Ascending aorta (tissue), 2 donors: ENCODE measurements at regions of chr19 and their contacts with region 1.

Region 1: GRCh38 chr19:58558623-58559274 is 338 bp upstream of the UBE2M start:
- DNase-seq: peak; percentile 92 to 99
- H3K4me3 ChIP-seq: peak overlapping the region; percentile 67 to 75
- H3K27ac ChIP-seq: peak overlapping the region; percentile 98 to 99
- H3K4me1 ChIP-seq: peaks cover 28 to 54% of the 10 kb centered on the region in 2 donors
- H3K27me3 ChIP-seq: no peaks in the 10 kb centered on the region
- CTCF ChIP-seq: no peak

Region 2: DNA sequence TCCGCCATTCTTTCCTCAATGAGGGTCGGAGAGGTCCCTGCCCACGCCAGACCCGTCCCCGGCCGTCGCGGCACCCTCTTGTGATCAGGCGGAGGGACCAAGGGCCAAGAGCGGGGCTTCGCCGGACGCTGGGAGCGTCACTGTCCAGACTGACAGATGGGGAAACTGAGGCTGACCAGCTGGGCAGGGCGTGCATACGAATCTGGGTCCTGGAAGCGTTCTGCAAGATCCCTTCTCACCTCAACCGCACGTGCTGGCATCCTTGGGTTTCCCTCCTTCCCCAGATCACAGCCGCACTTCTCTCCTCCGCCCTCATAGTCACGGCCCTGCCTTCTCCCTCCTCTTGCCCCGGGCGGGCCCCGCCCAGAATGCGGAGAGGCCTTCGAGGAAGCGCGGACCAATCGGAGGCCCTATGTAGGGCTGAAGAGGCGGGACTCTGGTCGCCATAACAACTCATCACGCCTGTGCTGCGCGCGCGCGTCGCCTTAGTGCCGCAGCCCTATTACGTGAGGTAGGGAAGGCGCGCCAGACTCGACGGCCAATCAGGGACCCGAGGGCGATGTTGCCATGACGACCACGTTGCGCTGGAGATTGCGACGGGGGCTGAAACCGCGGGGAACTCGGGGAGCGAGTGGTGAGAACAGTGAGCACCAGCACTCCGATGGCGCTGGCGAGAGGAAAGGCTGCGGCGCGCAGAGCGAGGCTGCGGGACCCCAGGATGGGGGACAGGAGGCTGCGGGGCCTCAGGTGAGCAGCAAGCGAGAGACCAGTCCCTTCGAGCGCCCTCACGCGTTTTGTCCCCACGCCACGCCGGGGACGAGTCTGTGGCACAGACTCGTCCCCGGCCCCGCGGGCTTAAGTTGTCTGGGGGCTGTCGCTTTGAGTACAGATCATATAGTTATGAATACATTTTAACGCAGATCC is 157.6 kb before region 1 on chr19:
- intact Hi-C with region 1: loop called (anchors 1 kb)
- DNase-seq: peak; percentile 99
- H3K4me3 ChIP-seq: peak overlapping the region; percentile 66 to 67
- H3K27ac ChIP-seq: no peak overlapping the region
- H3K4me1 ChIP-seq: peaks cover 7 to 10% of the 10 kb centered on the region in 2 donors
- H3K27me3 ChIP-seq: no peaks in the 10 kb centered on the region
- CTCF ChIP-seq: peak in 1 of 3 experiments; percentile 30

Region 3: DNA sequence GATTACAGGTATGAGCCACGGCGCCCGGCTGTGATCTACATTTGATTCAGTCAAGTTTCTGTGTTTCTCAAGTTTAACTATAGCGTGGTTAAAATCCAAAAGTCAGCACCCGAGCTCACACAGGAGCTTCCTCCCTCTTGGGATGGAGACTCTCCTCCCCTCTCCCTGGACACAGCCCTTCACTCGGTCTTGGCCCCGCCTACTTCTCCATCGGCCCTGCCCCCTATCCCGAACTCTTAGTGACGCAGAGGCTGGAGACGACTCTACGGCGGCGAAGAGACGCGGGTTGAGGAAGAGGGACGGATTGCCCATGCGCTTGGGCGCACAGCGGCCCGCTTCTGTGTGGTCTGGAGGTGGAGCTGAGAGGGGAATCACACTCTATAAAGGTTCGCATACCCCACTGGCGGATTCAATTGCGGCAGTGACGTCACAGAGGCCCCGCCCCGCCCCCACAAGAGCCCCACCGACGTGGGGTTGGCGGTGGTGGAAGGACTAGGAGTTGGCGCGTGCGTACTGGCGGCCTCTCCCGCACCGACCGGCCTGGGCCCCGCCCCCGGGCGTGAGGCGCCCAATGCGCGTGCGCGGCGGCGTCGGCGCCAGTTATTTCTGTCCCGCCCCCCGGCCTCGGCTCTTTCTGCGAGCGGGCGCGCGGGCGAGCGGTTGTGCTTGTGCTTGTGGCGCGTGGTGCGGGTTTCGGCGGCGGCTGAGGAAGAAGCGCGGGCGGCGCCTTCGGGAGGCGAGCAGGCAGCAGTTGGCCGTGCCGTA is 14.7 kb before region 1 on chr19 and contains the start of gene TRIM28:
- intact Hi-C with region 1: loop called (anchors 1 kb)
- DNase-seq: peak; percentile 95 to 99
- H3K4me3 ChIP-seq: peak within 1 kb of the TSS; percentile 75 to 82
- H3K27ac ChIP-seq: peak within 1 kb of the TSS; percentile 90 to 94
- H3K4me1 ChIP-seq: peaks cover 15 to 25% of the 10 kb centered on the region in 2 donors
- H3K27me3 ChIP-seq: no peaks in the 10 kb centered on the region
- CTCF ChIP-seq: peak in 1 of 3 experiments; percentile 6
- total RNA-seq, gene TRIM28: 222 TPM

Region 4: GRCh38 chr19:58572818-58573657 is 14.3 kb after region 1 on chr19 and contains the start of gene MZF1:
- intact Hi-C with region 1: loop called (anchors 1 kb)
- DNase-seq: peak; percentile 100
- H3K4me3 ChIP-seq: peak within 1 kb of the TSS; percentile 81 to 92
- H3K27ac ChIP-seq: peak within 1 kb of the TSS; percentile 95 to 98
- H3K4me1 ChIP-seq: peaks cover 4 to 20% of the 10 kb centered on the region in 2 donors
- H3K27me3 ChIP-seq: no peaks in the 10 kb centered on the region
- CTCF ChIP-seq: no peak
- total RNA-seq, gene MZF1: 77.1 TPM